Lower leg skin (tissue), 4 donors: ENCODE measurements at regions of chr12 and their contacts with region 1.

Region 1: GRCh38 chr12:12334367-12335040 is 15.5 kb downstream of the MANSC1 start:
- DNase-seq: peak in 1 of 2 donors; percentile 87
- H3K4me3 ChIP-seq: no peak overlapping the region
- CTCF ChIP-seq: peak in 1 of 3 donors; percentile 68
- POLR2A ChIP-seq: no peak

Region 2: DNA sequence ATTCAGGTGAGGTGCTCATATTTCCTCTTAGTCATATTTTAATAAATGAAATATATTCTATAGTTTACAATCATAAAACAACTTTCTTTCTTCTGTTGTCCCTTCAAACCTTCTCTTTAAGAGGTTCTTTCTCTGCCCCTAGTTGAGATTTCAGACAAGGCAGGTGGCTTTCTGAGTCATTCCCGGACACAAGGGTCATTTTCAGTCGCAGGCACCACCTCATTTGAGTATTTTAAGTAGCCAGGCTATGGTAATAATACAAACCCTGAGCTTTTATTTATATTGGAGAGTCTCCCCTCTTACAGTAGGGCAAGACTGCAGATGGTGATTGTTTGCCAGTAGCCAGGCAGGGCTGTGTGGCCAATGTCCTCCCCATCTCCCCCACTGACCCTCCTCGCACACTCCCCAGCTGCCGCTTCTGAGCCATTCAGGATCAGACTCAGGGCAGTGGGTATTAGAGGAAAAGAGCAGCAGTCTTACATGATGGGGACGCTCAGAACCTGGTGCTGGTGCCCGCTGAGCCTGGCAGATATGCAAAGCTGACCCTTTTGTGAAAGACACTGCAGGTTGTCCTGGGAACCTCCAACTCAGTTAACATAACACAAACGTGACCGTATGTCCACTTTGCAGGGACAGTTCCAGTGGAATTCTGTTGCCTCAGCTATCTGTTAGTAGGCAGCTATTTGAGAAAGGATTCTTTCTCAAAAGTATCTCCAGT is 364.9 kb before region 1 on chr12:
- intact Hi-C with region 1: no loop called
- DNase-seq: no peak
- H3K4me3 ChIP-seq: no peak overlapping the region
- CTCF ChIP-seq: no peak
- POLR2A ChIP-seq: no peak

Region 3: GRCh38 chr12:12070674-12071656 is 263.5 kb before region 1 on chr12 and contains the start of gene BCL2L14:
- intact Hi-C with region 1: loop called (anchors 10 kb)
- DNase-seq: no peak
- H3K4me3 ChIP-seq: no peak within 1 kb of the TSS
- CTCF ChIP-seq: no peak
- POLR2A ChIP-seq: no peak
- total RNA-seq, gene BCL2L14: not detected

Region 4: GRCh38 chr12:12546314-12546772 is 211.8 kb after region 1 on chr12:
- intact Hi-C with region 1: no loop called
- DNase-seq: no peak
- H3K4me3 ChIP-seq: no peak overlapping the region
- CTCF ChIP-seq: no peak
- POLR2A ChIP-seq: no peak